ENCODE measurements at regions of chr7 and their contacts with region 1.

Region 1: DNA sequence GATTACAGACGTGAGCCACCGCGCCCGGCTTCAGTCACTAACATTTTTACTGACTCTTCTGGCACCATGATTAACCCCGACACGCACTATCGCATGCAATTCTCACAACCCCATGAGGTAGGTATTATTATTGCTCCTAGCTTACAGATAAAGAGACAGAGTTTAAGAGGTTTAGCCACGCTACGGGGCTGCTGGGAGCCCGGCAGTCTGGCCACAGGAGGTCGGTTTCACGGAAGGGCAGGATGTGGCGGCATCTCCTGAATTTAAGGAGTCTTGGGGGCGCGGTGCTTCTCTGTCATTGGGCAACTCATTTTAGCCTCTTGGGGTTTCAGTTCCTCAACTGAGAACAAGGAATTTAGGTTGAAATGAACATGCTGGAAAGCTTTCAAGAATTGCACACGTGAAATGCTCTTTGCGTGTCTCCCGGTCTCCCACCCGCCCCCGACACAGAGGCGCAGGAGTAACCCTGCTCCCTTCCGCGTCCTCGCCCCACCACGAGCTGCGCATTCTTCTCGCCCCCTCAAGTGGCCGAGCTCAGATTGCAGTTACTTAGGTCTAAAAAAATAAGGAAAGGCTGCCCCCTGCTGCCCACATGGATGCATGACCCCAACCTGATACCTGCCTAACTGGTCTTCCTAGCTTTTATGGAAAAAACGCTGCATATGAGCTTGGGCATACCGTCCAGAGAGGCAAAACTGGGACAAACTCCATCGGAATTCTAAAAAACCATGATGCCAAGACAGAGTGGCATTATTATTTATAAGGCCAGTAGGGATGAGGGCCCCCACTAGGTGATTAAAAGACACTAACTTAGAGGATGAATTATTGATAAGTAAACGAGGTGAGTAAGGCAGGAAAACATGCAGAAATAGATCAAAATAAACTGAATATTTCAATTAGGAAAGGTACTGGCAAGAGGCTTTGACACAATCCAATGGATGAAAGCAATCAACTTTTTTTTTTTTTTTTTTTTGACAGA is 12.4 kb downstream of the PRSS2 start:
- DNase-seq: peak; percentile 93
- ATAC-seq: peak; percentile 90
- H3K4me3 ChIP-seq: peak overlapping the region; percentile 28 to 76 (median 56)
- H3K4me3 Mint-ChIP-seq: peak overlapping the region; percentile 81
- H3K27ac ChIP-seq: peak overlapping the region; percentile 27 to 56
- H3K27ac Mint-ChIP-seq: peak overlapping the region; percentile 92
- H3K4me1 ChIP-seq: peaks cover 14 to 25% of the 10 kb centered on the region in 2 donors
- H3K4me1 Mint-ChIP-seq: peaks cover 37% of the 10 kb centered on the region
- H3K27me3 ChIP-seq: no peaks in the 10 kb centered on the region
- H3K27me3 Mint-ChIP-seq: no peaks in the 10 kb centered on the region
- CTCF ChIP-seq: peak; percentile 91

Region 2: DNA sequence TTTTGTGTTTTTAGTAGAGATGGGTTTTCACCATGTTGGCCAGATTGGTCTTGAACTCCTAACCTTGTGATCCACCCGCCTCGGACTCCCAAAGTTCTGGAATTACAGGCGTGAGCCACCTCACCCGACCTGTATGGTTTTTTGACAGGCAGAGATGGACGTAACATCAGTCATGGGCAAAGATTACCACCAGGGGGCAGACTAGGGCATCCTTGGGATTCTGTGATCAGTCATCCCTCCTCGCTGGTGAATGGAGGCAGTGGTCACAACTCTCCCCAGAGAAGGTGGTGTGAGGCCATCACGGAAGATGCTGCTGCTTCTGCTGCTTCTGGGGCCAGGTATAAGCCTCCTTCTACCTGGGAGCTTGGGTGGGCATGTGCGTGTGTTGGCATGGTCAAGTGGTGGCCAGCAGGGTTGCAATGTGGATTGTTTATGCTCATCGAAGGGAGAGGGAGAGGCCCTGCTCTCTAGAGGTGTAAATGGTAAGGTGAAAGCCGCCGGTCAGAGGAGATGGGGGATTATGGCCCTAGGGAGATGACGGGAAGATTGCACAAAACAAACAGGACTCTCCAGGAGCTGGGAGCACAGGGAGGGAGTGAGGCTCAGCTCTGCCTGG is 156.7 kb before region 1 on chr7:
- CTCF ChIA-PET with region 1: interaction called, 119 read pairs
- POLR2A ChIA-PET with region 1: interaction called, 17 read pairs
- intact Hi-C with region 1: no loop called
- DNase-seq: peak; percentile 71
- ATAC-seq: peak; percentile 66
- H3K4me3 ChIP-seq: no peak overlapping the region
- H3K4me3 Mint-ChIP-seq: no peak overlapping the region
- H3K27ac ChIP-seq: no peak overlapping the region
- H3K27ac Mint-ChIP-seq: no peak overlapping the region
- H3K4me1 ChIP-seq: no peaks in the 10 kb centered on the region
- H3K4me1 Mint-ChIP-seq: peaks cover 3% of the 10 kb centered on the region
- H3K27me3 ChIP-seq: peaks cover 0 to 16% (median 0%) of the 10 kb centered on the region in 4 experiments
- H3K27me3 Mint-ChIP-seq: peaks cover 36% of the 10 kb centered on the region
- CTCF ChIP-seq: peak; percentile 78

Region 3: DNA sequence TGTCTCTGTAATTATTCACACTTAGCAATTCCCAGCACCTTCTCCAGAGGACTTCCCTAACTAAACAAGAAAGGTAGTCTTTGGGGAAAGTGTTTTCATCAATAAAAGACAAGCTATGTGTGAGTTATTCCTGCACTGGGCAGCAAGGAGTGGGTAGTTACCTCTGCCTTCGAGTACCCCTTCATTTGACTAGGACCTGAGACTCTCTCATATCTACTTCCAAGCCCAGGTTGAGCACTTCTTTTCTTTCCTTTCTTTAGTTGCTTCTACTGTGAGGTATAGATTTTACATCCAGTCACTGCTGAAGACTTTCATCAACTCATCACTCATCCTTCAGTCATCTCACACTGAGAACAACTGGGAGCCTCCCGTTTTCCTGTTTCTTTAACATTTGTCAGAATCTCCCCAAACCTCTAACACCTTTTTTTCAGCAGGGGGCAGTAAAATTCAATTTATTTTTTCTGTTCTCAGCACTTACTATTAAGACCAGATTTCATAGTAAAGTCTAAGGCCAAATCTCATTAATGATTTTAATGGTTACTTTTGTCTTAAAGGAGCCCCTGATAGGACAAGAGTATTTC is 114.0 kb before region 1 on chr7:
- CTCF ChIA-PET with region 1: interaction called, 33 read pairs
- POLR2A ChIA-PET with region 1: no interaction called
- intact Hi-C with region 1: loop called (anchors 1 kb)
- DNase-seq: peak; percentile 41
- ATAC-seq: peak; percentile 28
- H3K4me3 ChIP-seq: no peak overlapping the region
- H3K4me3 Mint-ChIP-seq: peak overlapping the region; percentile 26
- H3K27ac ChIP-seq: no peak overlapping the region
- H3K27ac Mint-ChIP-seq: no peak overlapping the region
- H3K4me1 ChIP-seq: peaks cover 22 to 37% of the 10 kb centered on the region in 2 donors
- H3K4me1 Mint-ChIP-seq: peaks cover 35% of the 10 kb centered on the region
- H3K27me3 ChIP-seq: no peaks in the 10 kb centered on the region
- H3K27me3 Mint-ChIP-seq: peaks cover under 1% of the 10 kb centered on the region
- CTCF ChIP-seq: peak; percentile 47

Region 4: GRCh38 chr7:142733271-142733670 is 49.9 kb before region 1 on chr7:
- CTCF ChIA-PET with region 1: interaction called, 10 read pairs
- POLR2A ChIA-PET with region 1: no interaction called
- intact Hi-C with region 1: no loop called
- DNase-seq: peak; percentile 16
- ATAC-seq: peak; percentile 36
- H3K4me3 ChIP-seq: no peak overlapping the region
- H3K4me3 Mint-ChIP-seq: no peak overlapping the region
- H3K27ac ChIP-seq: no peak overlapping the region
- H3K27ac Mint-ChIP-seq: no peak overlapping the region
- H3K4me1 ChIP-seq: no peaks in the 10 kb centered on the region
- H3K4me1 Mint-ChIP-seq: peaks cover 14% of the 10 kb centered on the region
- H3K27me3 ChIP-seq: no peaks in the 10 kb centered on the region
- H3K27me3 Mint-ChIP-seq: no peaks in the 10 kb centered on the region
- CTCF ChIP-seq: no peak

Region 5: DNA sequence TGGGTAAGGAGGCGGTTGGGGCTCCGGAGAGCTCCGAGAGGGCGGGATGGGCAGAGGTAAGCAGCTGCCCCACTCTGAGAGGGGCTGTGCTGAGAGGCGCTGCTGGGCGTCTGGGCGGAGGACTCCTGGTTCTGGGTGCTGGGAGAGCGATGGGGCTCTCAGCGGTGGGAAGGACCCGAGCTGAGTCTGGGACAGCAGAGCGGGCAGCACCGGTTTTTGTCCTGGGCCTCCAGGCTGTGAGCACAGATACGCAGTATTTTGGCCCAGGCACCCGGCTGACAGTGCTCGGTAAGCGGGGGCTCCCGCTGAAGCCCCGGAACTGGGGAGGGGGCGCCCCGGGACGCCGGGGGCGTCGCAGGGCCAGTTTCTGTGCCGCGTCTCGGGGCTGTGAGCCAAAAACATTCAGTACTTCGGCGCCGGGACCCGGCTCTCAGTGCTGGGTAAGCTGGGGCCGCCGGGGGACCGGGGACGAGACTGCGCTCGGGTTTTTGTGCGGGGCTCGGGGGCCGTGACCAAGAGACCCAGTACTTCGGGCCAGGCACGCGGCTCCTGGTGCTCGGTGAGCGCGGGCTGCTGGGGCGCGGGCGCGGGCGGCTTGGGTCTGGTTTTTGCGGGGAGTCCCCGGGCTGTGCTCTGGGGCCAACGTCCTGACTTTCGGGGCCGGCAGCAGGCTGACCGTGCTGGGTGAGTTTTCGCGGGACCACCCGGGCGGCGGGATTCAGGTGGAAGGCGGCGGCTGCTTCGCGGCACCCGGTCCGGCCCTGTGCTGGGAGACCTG is 13.6 kb after region 1 on chr7:
- CTCF ChIA-PET with region 1: interaction called, 1,138 read pairs
- POLR2A ChIA-PET with region 1: interaction called, 205 read pairs
- intact Hi-C with region 1: loop called (anchors 1 kb)
- DNase-seq: peak; percentile 54
- ATAC-seq: peak; percentile 40
- H3K4me3 ChIP-seq: peak overlapping the region; percentile 45 to 93 (median 90)
- H3K4me3 Mint-ChIP-seq: peak overlapping the region; percentile 100
- H3K27ac ChIP-seq: peak overlapping the region; percentile 94 to 99
- H3K27ac Mint-ChIP-seq: peak overlapping the region; percentile 100
- H3K4me1 ChIP-seq: peaks cover 62 to 81% of the 10 kb centered on the region in 2 donors
- H3K4me1 Mint-ChIP-seq: peaks cover 82% of the 10 kb centered on the region
- H3K27me3 ChIP-seq: no peaks in the 10 kb centered on the region
- H3K27me3 Mint-ChIP-seq: no peaks in the 10 kb centered on the region
- CTCF ChIP-seq: no peak

Region 6: DNA sequence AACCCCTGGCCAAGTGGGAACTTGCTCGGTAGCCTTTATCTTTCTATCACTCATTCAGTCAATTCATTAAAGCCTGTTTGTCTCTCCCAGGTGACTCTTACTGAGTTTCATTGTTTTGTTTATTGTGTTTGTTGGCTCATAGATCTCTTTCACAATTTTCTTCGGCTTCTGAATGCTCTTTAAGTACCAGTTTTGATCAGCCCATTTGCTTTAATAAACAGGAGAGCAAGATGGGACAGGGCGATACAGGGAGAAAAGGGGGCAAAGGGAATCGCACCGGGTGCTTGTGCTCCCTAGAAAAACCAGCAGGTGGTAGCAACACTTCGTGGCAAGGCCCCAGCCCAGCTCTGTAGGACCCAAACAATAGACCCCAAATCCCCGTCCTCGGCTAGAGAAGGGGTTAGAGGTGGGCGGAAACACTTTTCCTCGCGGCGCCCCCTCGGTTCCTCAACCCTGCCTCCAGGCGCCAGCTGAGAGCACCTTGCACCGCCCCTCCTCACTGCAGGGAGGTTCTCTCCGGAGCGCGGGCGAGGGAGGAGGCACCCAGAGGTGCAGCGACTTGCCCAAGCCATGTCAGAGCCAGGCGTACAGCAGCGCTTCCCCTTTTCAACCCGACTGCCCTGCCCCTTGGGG is 70.6 kb after region 1 on chr7:
- CTCF ChIA-PET with region 1: interaction called, 30 read pairs
- POLR2A ChIA-PET with region 1: interaction called, 24 read pairs
- intact Hi-C with region 1: loop called (anchors 1 kb)
- DNase-seq: peak; percentile 91
- ATAC-seq: peak; percentile 88
- H3K4me3 ChIP-seq: peak overlapping the region; percentile 46 to 99 (median 92)
- H3K4me3 Mint-ChIP-seq: peak overlapping the region; percentile 99
- H3K27ac ChIP-seq: peak overlapping the region; percentile 82 to 86
- H3K27ac Mint-ChIP-seq: peak overlapping the region; percentile 99
- H3K4me1 ChIP-seq: peaks cover 12 to 24% of the 10 kb centered on the region in 2 donors
- H3K4me1 Mint-ChIP-seq: peaks cover 29% of the 10 kb centered on the region
- H3K27me3 ChIP-seq: no peaks in the 10 kb centered on the region
- H3K27me3 Mint-ChIP-seq: no peaks in the 10 kb centered on the region
- CTCF ChIP-seq: peak; percentile 89

Region 7: DNA sequence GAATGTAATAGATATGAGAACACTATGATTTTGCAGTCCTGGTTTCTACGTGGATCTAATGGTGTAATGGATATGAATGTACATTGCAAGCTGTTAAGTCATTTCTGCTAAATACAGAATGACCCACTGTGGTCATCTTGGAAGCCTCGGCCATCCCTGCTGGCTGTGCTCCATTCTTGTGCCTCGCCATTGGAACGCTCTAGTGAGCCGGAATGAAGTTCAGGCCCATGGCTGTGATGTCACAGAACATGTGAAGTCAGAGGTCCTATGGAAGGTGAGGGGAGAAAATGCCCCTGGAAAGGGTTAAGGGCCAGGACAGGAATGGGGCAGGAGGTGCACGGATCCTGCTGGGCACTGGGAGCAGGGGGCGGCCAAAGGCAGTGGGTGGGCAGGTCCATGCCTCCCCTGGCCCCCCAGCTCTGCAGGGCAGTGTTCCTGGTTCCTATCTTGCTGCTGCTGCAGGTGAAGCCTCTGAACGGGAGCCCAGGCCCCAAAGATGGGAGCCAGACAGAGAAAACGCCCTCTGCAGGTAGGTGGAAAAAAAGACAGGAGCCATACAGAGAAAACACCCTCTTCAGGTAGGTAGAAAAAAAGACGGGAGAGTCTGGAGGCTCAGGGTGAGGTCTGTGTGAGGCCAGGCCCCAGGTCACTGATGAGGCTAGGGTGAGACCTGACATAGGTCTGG is 156.2 kb after region 1 on chr7 and contains the start of gene LLCFC1:
- CTCF ChIA-PET with region 1: no interaction called
- POLR2A ChIA-PET with region 1: no interaction called
- intact Hi-C with region 1: no loop called
- DNase-seq: no peak
- ATAC-seq: no peak
- H3K4me3 ChIP-seq: no peak within 1 kb of the TSS
- H3K4me3 Mint-ChIP-seq: no peak within 1 kb of the TSS
- H3K27ac ChIP-seq: no peak within 1 kb of the TSS
- H3K27ac Mint-ChIP-seq: no peak within 1 kb of the TSS
- H3K4me1 ChIP-seq: no peaks in the 10 kb centered on the region
- H3K4me1 Mint-ChIP-seq: no peaks in the 10 kb centered on the region
- H3K27me3 ChIP-seq: peaks cover 0 to 3% (median 0%) of the 10 kb centered on the region in 4 experiments
- H3K27me3 Mint-ChIP-seq: peaks cover 26% of the 10 kb centered on the region
- CTCF ChIP-seq: no peak
- total RNA-seq, gene LLCFC1: not detected in 2 replicates

Region 8: GRCh38 chr7:143008007-143008901 is 225.0 kb after region 1 on chr7:
- CTCF ChIA-PET with region 1: interaction called, 23 read pairs
- POLR2A ChIA-PET with region 1: no interaction called
- intact Hi-C with region 1: no loop called
- DNase-seq: peak; percentile 88
- ATAC-seq: peak; percentile 96
- H3K4me3 ChIP-seq: no peak overlapping the region
- H3K4me3 Mint-ChIP-seq: no peak overlapping the region
- H3K27ac ChIP-seq: no peak overlapping the region
- H3K27ac Mint-ChIP-seq: no peak overlapping the region
- H3K4me1 ChIP-seq: peaks cover 36 to 49% of the 10 kb centered on the region in 2 donors
- H3K4me1 Mint-ChIP-seq: peaks cover 49% of the 10 kb centered on the region
- H3K27me3 ChIP-seq: no peaks in the 10 kb centered on the region
- H3K27me3 Mint-ChIP-seq: no peaks in the 10 kb centered on the region
- CTCF ChIP-seq: peak; percentile 92

Measured in B cell (primary cell).